MCF 10A (cell line): ENCODE measurements at regions of chr3 and their contacts with region 1.

Region 1: GRCh38 chr3:177777699-177778098 is 580.4 kb upstream of the TBL1XR1 start:
- DNase-seq: peak; percentile 74
- H3K4me3 Mint-ChIP-seq: no peak overlapping the region
- H3K27ac Mint-ChIP-seq: no peak overlapping the region
- H3K4me1 Mint-ChIP-seq: peaks cover 15% of the 10 kb centered on the region
- H3K27me3 Mint-ChIP-seq: no peaks in the 10 kb centered on the region
- CTCF ChIP-seq: peak; percentile 49

Region 2: GRCh38 chr3:177050501-177051237 is 727.0 kb before region 1 on chr3:
- CTCF ChIA-PET with region 1: interaction called, 3 read pairs
- POLR2A ChIA-PET with region 1: interaction called, 4 read pairs
- intact Hi-C with region 1: loop called (anchors 1 kb)
- DNase-seq: peak; percentile 53
- H3K4me3 Mint-ChIP-seq: no peak overlapping the region
- H3K27ac Mint-ChIP-seq: no peak overlapping the region
- H3K4me1 Mint-ChIP-seq: peaks cover 5% of the 10 kb centered on the region
- H3K27me3 Mint-ChIP-seq: no peaks in the 10 kb centered on the region
- CTCF ChIP-seq: peak; percentile 52

Region 3: DNA sequence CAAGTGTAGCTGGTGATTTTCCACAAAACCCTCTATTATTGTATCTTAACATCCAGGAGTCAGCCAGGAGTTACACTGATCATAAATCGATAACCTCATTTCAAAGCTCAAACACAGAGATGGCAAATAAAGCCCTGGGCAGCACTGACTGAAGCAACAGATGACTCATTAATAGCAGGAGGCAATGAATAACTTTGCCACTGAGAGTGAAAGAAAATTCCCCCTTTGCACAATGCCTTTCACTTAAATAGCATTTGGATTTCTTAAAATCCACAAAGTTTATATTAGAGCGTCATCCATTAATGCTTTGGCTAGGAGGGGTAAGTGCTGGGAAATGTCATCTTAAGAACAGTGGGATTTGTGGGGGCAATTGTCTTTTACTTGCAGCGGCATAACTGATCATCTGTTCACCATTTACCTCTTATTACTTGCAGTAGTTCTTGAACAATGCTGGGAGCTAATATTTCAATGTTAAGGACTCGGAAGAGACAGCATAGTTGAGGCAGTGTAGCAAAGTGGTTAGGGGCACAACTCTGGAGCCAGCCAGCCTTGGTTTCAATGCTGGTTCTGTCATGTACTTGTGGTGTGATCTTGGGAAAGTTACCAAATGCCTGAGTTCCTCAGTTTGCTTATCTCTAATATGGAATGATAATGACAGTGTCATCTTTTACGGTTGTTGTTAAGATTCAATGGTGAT is 50.0 kb after region 1 on chr3:
- CTCF ChIA-PET with region 1: no interaction called
- POLR2A ChIA-PET with region 1: no interaction called
- intact Hi-C with region 1: no loop called
- DNase-seq: peak; percentile 88
- H3K4me3 Mint-ChIP-seq: peak overlapping the region; percentile 75
- H3K27ac Mint-ChIP-seq: peak overlapping the region; percentile 89
- H3K4me1 Mint-ChIP-seq: peaks cover 51% of the 10 kb centered on the region
- H3K27me3 Mint-ChIP-seq: no peaks in the 10 kb centered on the region
- CTCF ChIP-seq: no peak

Region 4: DNA sequence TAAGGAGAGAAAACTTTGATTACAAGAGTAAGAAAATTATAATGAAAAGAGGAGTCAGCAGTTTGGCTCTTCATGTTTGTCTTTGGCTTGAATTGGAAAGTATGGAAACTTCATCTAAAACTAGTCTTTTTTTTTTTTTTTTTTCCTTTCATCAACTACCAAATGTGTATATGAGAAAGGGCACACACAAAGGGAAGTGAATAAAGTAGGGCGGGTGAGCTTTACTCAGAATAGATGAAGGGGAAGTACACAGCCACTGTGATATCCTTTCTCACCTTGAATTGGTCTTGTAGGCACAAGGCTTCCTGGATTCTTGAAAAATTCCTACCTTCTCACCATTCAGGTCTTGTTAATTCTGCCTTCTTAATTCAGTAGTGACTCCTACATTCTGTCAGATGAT is 106.3 kb after region 1 on chr3:
- CTCF ChIA-PET with region 1: no interaction called
- POLR2A ChIA-PET with region 1: no interaction called
- intact Hi-C with region 1: no loop called
- DNase-seq: no peak
- H3K4me3 Mint-ChIP-seq: no peak overlapping the region
- H3K27ac Mint-ChIP-seq: no peak overlapping the region
- H3K4me1 Mint-ChIP-seq: peaks cover 4% of the 10 kb centered on the region
- H3K27me3 Mint-ChIP-seq: no peaks in the 10 kb centered on the region
- CTCF ChIP-seq: no peak